Activated B cell treated with CpG ODN at 0.5 μM for 24 hours (primary cell): ENCODE measurements at regions of chr22 and their contacts with region 1.

Region 1: DNA sequence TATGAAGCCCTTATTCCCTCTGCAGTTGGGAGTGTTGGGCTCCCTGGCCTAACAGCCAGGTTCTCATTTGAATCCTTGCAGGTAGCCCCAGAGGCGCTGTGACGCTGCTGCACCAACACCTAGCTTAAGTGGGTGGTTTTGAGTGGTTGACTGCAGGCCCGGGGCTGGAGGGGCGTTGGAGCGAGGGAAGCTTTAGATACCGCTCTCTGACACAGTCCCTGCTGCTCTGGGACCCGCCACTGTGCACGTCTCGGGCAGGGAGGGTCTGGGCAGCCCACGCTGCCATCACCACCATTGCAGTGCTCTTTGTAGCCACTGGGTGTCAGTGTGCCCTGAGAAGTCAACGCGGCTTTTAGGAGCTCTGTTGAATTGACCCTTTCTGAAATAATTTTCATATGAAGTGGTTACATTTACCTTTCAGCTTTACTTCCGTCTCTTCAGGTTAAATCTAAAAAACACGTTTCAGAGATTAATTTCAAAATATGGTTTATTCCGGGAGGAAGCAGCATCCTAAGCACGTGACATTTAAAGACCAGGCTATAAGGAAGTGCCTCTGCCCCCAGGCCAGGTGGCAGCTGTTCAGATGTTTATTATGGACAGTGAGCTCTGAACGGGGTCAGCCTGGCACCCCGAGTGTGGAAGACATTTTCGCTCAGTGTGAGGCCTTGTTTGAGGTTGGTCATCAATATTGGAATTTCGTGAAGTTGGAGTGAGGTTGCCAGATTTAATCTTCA is 30.9 kb upstream of the PARVB start:
- DNase-seq: peak; percentile 53
- ATAC-seq: peak; percentile 74
- H3K4me3 Mint-ChIP-seq: peak overlapping the region; percentile 39
- H3K27ac Mint-ChIP-seq: peak overlapping the region; percentile 59
- H3K4me1 Mint-ChIP-seq: peaks cover 46% of the 10 kb centered on the region
- H3K27me3 Mint-ChIP-seq: no peaks in the 10 kb centered on the region
- CTCF ChIP-seq: peak; percentile 66

Region 2: GRCh38 chr22:44026630-44027511 is 33.7 kb after region 1 on chr22:
- CTCF ChIA-PET with region 1: interaction called, 19 read pairs
- POLR2A ChIA-PET with region 1: interaction called, 61 read pairs
- intact Hi-C with region 1: loop called (anchors 1 kb)
- DNase-seq: peak; percentile 79
- ATAC-seq: peak; percentile 55
- H3K4me3 Mint-ChIP-seq: peak overlapping the region; percentile 83
- H3K27ac Mint-ChIP-seq: peak overlapping the region; percentile 100
- H3K4me1 Mint-ChIP-seq: peaks cover 82% of the 10 kb centered on the region
- H3K27me3 Mint-ChIP-seq: no peaks in the 10 kb centered on the region
- CTCF ChIP-seq: no peak

Region 3: DNA sequence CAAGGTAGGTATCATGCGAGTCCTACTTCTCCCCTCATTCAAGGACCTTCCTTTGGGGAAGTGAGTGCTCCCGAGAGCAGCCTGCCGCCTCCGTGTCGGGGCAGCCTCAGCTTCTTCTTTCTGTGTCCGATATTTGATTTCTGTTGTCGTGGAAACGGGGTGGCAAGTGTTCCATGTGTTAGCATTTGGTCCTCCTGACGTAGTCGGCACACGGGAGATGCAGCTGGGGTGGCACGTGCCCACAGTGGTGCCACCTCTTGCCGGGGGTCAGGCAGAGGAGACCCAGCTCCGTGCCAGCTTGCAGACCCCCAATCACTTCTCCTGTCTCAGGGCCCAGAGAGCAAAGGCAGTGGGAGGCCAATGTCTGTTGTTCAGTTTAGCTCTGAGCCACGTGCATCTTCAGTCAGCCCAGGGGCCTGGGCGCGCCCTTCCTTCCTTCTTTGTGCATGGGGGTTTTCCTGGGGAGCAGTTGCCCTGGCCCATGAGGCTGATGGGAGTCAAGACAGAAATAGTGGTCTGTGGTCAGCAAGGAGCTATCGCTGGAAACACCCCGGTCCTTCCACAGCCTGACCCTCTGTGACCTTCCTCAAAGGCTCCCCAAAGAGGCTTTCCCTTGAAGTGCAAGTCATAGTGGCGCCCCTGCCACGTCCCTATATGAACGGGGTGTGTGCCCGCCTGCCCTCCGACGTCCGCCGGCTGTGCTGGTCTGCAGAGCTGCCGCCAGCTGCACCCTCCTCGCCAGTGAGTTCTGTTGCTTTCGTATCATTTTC is 75.4 kb after region 1 on chr22:
- CTCF ChIA-PET with region 1: interaction called, 41 read pairs
- POLR2A ChIA-PET with region 1: interaction called, 9 read pairs
- intact Hi-C with region 1: loop called (anchors 1 kb)
- DNase-seq: peak; percentile 56
- ATAC-seq: peak; percentile 62
- H3K4me3 Mint-ChIP-seq: peak overlapping the region; percentile 76
- H3K27ac Mint-ChIP-seq: peak overlapping the region; percentile 94
- H3K4me1 Mint-ChIP-seq: peaks cover 65% of the 10 kb centered on the region
- H3K27me3 Mint-ChIP-seq: no peaks in the 10 kb centered on the region
- CTCF ChIP-seq: no peak

Region 4: GRCh38 chr22:44329179-44329796 is 336.1 kb after region 1 on chr22:
- CTCF ChIA-PET with region 1: interaction called, 3 read pairs
- POLR2A ChIA-PET with region 1: no interaction called
- intact Hi-C with region 1: loop called (anchors 5 kb)
- DNase-seq: no peak
- ATAC-seq: peak; percentile 66
- H3K4me3 Mint-ChIP-seq: no peak overlapping the region
- H3K27ac Mint-ChIP-seq: no peak overlapping the region
- H3K4me1 Mint-ChIP-seq: peaks cover 28% of the 10 kb centered on the region
- H3K27me3 Mint-ChIP-seq: peaks cover 51% of the 10 kb centered on the region
- CTCF ChIP-seq: no peak

Region 5: DNA sequence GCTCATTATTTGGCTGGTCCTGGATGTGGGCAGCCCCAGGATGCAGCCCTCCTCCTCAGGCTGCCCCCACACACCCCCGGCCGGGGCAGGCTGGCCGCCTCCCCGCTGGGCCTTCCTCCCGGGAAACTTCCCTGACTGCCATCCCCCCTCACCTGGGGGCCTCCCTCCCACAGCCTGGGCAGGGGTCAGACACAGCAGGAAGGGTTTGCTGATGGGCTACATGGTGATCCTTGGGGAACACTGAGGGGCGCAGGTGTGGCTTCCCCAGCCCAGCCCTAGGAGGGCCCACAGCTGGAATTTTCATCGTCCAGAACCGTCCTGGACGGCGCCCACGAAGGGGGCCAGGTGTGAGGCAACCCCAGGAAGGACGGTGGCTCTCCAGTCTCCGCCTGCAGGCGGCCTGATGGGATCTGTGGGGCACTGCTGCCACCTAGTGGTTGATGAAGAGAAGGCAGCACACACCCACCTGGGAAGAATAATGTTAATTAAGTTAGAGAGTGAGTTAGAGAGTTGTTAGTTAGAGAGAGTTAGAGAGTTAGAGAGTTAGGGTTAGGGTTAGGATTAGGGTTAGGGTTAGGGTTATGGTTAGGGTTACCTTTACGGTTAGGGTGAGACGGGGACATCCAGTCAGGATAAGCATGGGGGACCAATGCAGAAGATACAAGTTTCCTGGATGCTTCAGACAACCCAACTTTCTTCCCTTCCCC is 632.9 kb after region 1 on chr22:
- CTCF ChIA-PET with region 1: interaction called, 36 read pairs
- POLR2A ChIA-PET with region 1: no interaction called
- intact Hi-C with region 1: loop called (anchors 1 kb)
- DNase-seq: peak; percentile 67
- ATAC-seq: peak; percentile 90
- H3K4me3 Mint-ChIP-seq: no peak overlapping the region
- H3K27ac Mint-ChIP-seq: no peak overlapping the region
- H3K4me1 Mint-ChIP-seq: no peaks in the 10 kb centered on the region
- H3K27me3 Mint-ChIP-seq: peaks cover 16% of the 10 kb centered on the region
- CTCF ChIP-seq: peak; percentile 55